ENCODE measurements at regions of chr3 and their contacts with region 1.

Region 1: GRCh38 chr3:72847751-72848702 is at the start of gene SHQ1:
- DNase-seq: peak; percentile 90 to 95
- H3K4me3 ChIP-seq: peak within 1 kb of the TSS; percentile 77 to 90 (median 90)
- H3K27ac ChIP-seq: peak within 1 kb of the TSS; percentile 70 to 85
- H3K4me1 ChIP-seq: peaks cover 0 to 4% of the 10 kb centered on the region in 2 donors
- H3K27me3 ChIP-seq: no peaks in the 10 kb centered on the region
- CTCF ChIP-seq: no peak
- POLR2A ChIP-seq: no peak
- total RNA-seq, gene SHQ1: 9.6 to 19.3 (median 17.4) TPM

Region 2: DNA sequence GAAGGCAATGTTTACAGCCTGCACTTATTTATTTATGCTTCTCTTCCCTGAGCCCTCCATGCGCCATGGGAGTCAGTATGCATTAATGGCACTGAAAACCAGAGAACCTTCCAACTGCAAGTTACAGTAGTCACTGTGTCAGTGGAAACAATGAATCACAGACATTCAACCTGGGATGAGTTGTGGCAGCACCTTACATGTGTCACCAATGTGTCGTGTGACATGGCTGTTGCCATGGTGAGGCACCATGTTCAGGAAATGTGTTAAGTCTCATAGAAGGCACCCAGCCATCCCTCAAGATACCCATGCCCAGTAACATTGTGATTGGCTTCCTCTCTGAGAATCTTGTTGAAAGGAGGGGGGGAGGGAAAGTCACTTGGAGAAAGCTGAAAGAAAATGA is 1369.5 kb before region 1 on chr3:
- intact Hi-C with region 1: loop called (anchors 5 kb)
- DNase-seq: no peak
- H3K4me3 ChIP-seq: no peak overlapping the region
- H3K27ac ChIP-seq: no peak overlapping the region
- H3K4me1 ChIP-seq: peaks cover 0 to 4% of the 10 kb centered on the region in 2 donors
- H3K27me3 ChIP-seq: no peaks in the 10 kb centered on the region
- CTCF ChIP-seq: no peak
- POLR2A ChIP-seq: no peak

Region 3: GRCh38 chr3:72982609-72983366 is 134.8 kb after region 1 on chr3:
- intact Hi-C with region 1: no loop called
- DNase-seq: no peak
- H3K4me3 ChIP-seq: no peak overlapping the region
- H3K27ac ChIP-seq: no peak overlapping the region
- H3K4me1 ChIP-seq: no peaks in the 10 kb centered on the region
- H3K27me3 ChIP-seq: no peaks in the 10 kb centered on the region
- CTCF ChIP-seq: no peak
- POLR2A ChIP-seq: no peak

Measured in breast epithelium (tissue), 4 donors.